Esophagus muscularis mucosa (tissue), 4 donors: ENCODE measurements at regions of chr10 and their contacts with region 1.

Region 1: GRCh38 chr10:49164559-49165188 is 23.5 kb downstream of the TMEM273 start:
- DNase-seq: no peak
- H3K4me3 ChIP-seq: no peak overlapping the region
- H3K27ac ChIP-seq: no peak overlapping the region
- H3K4me1 ChIP-seq: peaks cover 0 to 9% (median 3%) of the 10 kb centered on the region in 4 donors
- H3K27me3 ChIP-seq: no peaks in the 10 kb centered on the region
- CTCF ChIP-seq: peak; percentile 35 to 60 (median 38)
- EP300 ChIP-seq: no peak
- POLR2A ChIP-seq: no peak

Region 2: DNA sequence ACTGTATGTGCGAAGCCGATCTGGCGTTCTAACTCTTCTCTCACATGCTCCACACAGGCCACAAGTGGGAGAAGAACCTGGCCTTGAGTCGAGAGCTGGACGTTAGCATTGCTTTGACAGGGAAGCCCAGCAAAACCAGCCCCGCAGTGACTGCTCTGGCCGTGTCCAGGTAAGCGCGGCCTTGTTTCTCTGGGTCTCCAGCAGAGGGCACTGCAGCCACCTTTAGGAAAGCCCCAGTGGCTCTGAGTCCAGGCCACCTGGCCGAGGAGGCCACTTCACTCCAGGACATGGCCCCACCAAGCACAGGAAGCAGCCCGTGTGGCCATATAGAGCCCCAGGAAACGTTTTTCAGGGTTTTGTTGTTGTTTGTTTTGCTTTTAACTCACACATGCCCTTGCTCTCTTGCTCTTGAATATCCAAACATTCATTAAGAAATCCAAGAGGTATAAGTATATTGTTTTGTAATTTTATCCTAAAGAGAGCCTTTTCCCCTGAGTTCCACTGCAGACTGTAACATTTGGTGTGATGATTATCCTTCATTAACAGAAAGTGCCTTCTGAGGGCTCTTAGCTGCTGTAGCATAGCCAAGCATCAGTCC is 183.3 kb before region 1 on chr10:
- intact Hi-C with region 1: loop called (anchors 10 kb)
- DNase-seq: no peak
- H3K4me3 ChIP-seq: no peak overlapping the region
- H3K27ac ChIP-seq: no peak overlapping the region
- H3K4me1 ChIP-seq: peaks cover 0 to 5% (median 2%) of the 10 kb centered on the region in 4 donors
- H3K27me3 ChIP-seq: no peaks in the 10 kb centered on the region
- CTCF ChIP-seq: peak; percentile 56 to 85 (median 59)
- EP300 ChIP-seq: no peak
- POLR2A ChIP-seq: no peak

Region 3: DNA sequence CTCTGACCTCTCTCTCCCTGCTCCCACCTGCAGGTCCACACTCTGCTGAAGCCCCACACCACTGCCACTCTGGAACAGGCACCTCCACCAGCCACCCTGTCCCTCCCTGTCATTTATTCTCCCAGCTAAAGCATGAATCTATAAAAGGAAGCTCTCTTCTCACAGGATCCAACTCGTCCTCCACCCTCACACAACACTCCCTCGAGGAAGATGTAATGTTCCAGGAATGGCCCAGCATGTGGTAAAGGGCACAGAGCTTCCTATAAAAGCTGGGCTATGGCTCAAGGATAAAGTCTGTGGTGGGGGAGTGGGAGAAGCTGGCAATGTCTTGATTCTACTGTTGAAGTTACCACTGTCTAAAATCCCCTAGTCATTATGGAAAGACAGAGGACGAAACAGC is 306.9 kb after region 1 on chr10:
- intact Hi-C with region 1: no loop called
- DNase-seq: no peak
- H3K4me3 ChIP-seq: no peak overlapping the region
- H3K27ac ChIP-seq: no peak overlapping the region
- H3K4me1 ChIP-seq: no peaks in the 10 kb centered on the region
- H3K27me3 ChIP-seq: no peaks in the 10 kb centered on the region
- CTCF ChIP-seq: no peak
- EP300 ChIP-seq: no peak
- POLR2A ChIP-seq: no peak